Activated B cell treated with CpG ODN at 0.5 μM for 24 hours (primary cell): ENCODE measurements at regions of chr1 and their contacts with region 1.

Region 1: GRCh38 chr1:160726498-160727315 is 12.3 kb upstream of the SLAMF7 start:
- DNase-seq: peak; percentile 32
- ATAC-seq: peak; percentile 88
- H3K4me3 Mint-ChIP-seq: no peak overlapping the region
- H3K27ac Mint-ChIP-seq: no peak overlapping the region
- H3K4me1 Mint-ChIP-seq: peaks cover 10% of the 10 kb centered on the region
- H3K27me3 Mint-ChIP-seq: no peaks in the 10 kb centered on the region
- CTCF ChIP-seq: peak; percentile 83

Region 2: DNA sequence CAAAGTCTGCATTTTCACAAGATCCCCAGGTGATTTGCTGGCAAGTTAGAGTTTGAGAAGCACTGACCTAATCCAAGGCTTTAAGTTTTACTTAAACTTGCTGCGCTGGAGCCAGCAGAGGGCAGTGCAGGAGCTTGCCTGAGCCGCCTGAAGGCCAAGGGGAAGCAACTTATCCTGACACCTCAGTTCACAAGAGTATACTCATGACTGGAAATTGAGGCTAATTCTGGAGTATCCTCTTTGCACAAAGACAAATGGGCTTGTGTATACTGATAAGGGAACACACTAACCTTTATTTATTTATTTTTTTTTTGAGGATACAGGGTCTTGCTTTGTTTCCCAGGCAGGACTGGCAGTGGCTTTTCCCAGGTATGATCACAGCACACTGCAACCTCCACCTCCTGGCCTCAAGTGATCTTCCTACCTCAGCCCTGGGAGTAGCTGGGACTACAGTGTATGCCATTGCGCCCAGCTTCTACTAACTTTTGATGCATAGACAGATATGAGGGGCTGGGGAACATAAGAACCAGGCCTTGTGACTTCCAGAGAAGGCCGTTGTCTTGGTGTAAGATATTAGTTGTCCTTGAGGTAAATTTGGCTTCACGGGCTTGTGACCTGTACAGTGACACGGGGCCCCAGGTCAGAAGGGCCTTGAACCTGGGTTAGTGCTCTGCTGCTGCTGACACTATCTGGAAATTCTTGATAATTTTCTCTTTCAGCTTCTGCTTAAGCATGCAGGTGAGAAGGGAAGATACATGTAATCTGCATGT is 50.9 kb before region 1 on chr1:
- CTCF ChIA-PET with region 1: interaction called, 8 read pairs
- POLR2A ChIA-PET with region 1: interaction called, 3 read pairs
- intact Hi-C with region 1: loop called (anchors 1 kb)
- DNase-seq: peak; percentile 60
- ATAC-seq: peak; percentile 81
- H3K4me3 Mint-ChIP-seq: peak overlapping the region; percentile 44
- H3K27ac Mint-ChIP-seq: peak overlapping the region; percentile 61
- H3K4me1 Mint-ChIP-seq: peaks cover 14% of the 10 kb centered on the region
- H3K27me3 Mint-ChIP-seq: no peaks in the 10 kb centered on the region
- CTCF ChIP-seq: peak; percentile 57

Region 3: GRCh38 chr1:160739098-160739511 is 12.4 kb after region 1 on chr1 and contains the start of gene SLAMF7:
- CTCF ChIA-PET with region 1: interaction called, 6 read pairs
- POLR2A ChIA-PET with region 1: interaction called, 4 read pairs
- intact Hi-C with region 1: loop called (anchors 1 kb)
- DNase-seq: peak; percentile 32
- ATAC-seq: peak; percentile 94
- H3K4me3 Mint-ChIP-seq: peak within 1 kb of the TSS; percentile 88
- H3K27ac Mint-ChIP-seq: peak within 1 kb of the TSS; percentile 90
- H3K4me1 Mint-ChIP-seq: peaks cover 72% of the 10 kb centered on the region
- H3K27me3 Mint-ChIP-seq: no peaks in the 10 kb centered on the region
- CTCF ChIP-seq: no peak
- total RNA-seq, gene SLAMF7: 99.2 and 119 TPM in 2 replicates

Region 4: DNA sequence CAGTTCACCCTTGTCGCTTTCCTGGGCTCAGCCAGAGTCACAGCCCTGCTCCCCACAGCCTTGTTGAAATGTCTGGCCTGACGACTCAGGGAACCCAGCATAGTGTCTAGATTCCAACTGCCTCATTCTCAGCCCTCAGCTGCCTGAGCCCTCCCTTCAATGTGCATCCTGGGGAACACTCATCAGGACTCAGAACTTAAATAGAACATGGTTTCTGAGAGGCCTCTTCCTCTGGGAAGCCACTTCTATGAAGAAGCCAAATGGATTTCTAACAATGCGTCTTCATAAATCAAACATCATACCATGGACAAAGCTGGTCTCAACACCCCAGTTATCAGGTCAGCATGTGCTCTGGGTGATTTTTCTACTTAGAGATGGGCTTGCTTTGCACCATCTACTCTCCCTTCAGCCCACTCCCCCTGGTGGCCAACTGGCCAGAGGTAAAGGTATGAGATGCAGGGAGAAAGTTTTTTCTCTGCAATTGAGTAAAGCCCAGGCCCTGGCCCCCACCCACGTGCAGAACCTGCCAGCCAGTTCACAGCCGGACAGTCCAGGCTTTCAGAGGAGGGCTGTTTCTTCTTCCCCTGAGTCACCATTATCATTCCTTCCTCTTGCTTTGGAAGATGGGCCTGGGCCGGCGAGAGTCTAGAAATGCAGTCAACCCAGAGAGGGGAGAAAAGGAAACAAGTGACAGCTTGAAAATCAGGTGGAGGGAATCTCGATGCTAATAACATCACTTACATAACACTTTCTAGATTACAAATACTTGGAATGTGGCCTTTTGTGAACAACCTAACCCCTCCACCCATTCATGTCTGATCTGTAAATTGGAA is 103.8 kb after region 1 on chr1:
- CTCF ChIA-PET with region 1: interaction called, 31 read pairs
- POLR2A ChIA-PET with region 1: interaction called, 5 read pairs
- intact Hi-C with region 1: loop called (anchors 1 kb)
- DNase-seq: peak; percentile 56
- ATAC-seq: peak; percentile 83
- H3K4me3 Mint-ChIP-seq: no peak overlapping the region
- H3K27ac Mint-ChIP-seq: peak overlapping the region; percentile 68
- H3K4me1 Mint-ChIP-seq: peaks cover 9% of the 10 kb centered on the region
- H3K27me3 Mint-ChIP-seq: no peaks in the 10 kb centered on the region
- CTCF ChIP-seq: no peak

Region 5: GRCh38 chr1:160884579-160884978 is 157.9 kb after region 1 on chr1:
- CTCF ChIA-PET with region 1: no interaction called
- POLR2A ChIA-PET with region 1: no interaction called
- intact Hi-C with region 1: no loop called
- DNase-seq: no peak
- ATAC-seq: no peak
- H3K4me3 Mint-ChIP-seq: no peak overlapping the region
- H3K27ac Mint-ChIP-seq: no peak overlapping the region
- H3K4me1 Mint-ChIP-seq: no peaks in the 10 kb centered on the region
- H3K27me3 Mint-ChIP-seq: peaks cover 6% of the 10 kb centered on the region
- CTCF ChIP-seq: no peak

Region 6: GRCh38 chr1:160951443-160952128 is 224.9 kb after region 1 on chr1:
- CTCF ChIA-PET with region 1: interaction called, 146 read pairs
- POLR2A ChIA-PET with region 1: interaction called, 6 read pairs
- intact Hi-C with region 1: loop called (anchors 1 kb)
- DNase-seq: peak; percentile 46
- ATAC-seq: peak; percentile 89
- H3K4me3 Mint-ChIP-seq: no peak overlapping the region
- H3K27ac Mint-ChIP-seq: no peak overlapping the region
- H3K4me1 Mint-ChIP-seq: peaks cover 7% of the 10 kb centered on the region
- H3K27me3 Mint-ChIP-seq: no peaks in the 10 kb centered on the region
- CTCF ChIP-seq: no peak